Dorsolateral prefrontal cortex (tissue), 120 donors: ENCODE measurements at regions of chr17 and their contacts with region 1.

Region 1: DNA sequence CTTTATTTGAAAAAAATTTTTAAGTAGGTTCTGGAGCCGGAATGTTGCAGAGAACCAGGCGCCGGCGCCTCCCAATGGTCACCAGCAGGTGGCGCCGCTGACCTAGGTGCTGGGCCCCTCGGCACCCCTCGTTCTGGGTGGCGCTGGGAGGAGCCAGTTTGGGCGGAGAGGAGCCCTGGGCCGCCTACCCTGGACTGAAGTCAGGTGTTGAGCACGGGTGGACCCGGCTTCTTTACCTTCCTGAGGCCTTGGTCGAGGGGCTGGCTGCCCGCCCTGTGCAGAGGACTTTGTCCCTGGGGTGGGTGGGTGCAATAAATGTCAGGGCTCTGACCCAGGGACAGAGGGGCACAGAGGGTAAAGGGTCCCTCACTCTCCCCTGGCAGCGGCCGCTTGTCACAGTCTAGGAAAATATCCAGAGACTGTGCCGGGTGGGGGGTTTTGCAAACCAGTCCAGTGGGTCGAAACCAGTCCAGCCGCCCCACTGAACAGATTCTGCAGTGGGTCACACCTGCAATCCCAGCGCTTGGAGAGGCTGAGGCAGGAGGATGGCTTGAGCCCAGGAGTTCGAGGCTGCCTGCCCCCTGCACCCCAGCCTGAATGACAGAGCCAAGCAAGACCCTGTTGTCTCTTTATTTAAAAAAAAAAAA is 30.1 kb upstream of the TNFRSF13B start:
- DNase-seq: peak; percentile 67 to 88 (median 77)
- H3K4me3 ChIP-seq: peak overlapping the region in 19 of 59 donors; percentile 5 to 46 (median 23)
- H3K27ac ChIP-seq: peak overlapping the region in 2 of 59 donors; percentile 6 to 53
- H3K27me3 ChIP-seq: no peaks in the 10 kb centered on the region
- CTCF ChIP-seq: peak; percentile 84 to 99 (median 97)

Region 2: GRCh38 chr17:17041571-17042380 is 39.8 kb after region 1 on chr17:
- intact Hi-C with region 1: loop called in 1 of 2 experiments (anchors 5 kb)
- DNase-seq: peak; percentile 99 to 100 (median 99)
- H3K4me3 ChIP-seq: peak overlapping the region; percentile 49 to 86 (median 69)
- H3K27ac ChIP-seq: peak overlapping the region; percentile 49 to 94 (median 87)
- H3K27me3 ChIP-seq: no peaks in the 10 kb centered on the region
- CTCF ChIP-seq: peak in 12 of 56 donors; percentile 7 to 39 (median 18)

Region 3: DNA sequence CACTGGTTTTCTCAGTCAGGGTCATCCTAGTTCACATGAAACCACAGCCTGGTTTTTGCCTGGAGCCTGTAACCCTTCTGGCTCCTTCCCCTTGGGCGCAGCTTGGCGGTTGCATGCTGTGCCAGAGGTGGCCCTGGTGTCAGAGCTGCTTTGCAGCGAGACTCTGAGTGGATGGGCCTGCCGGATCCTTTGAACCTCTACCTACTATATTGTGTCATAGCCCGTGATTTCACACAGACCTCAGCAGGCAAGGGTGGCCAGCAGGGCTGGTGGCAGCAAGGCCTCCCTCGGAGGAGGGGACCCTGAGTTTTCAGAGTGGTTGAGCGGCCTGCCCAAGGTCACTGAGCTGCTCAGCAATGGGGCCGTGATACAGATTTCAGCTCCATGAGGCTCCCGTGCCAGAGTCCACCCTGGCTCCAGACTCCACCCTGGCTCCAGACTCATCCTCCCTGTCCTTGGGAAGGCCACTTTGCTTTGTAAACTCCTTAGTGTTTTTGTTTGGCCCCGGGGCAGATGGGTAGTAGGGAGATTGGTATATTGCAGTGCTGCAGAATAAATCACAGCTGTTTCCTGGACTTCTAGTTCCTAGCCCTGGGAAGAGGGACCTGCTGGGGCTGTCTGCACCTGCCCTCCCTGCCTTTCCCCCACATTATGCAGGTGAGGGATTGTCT is 49.9 kb after region 1 on chr17:
- intact Hi-C with region 1: no loop called
- DNase-seq: peak in 2 of 10 donors; percentile 24 to 35
- H3K4me3 ChIP-seq: no peak overlapping the region
- H3K27ac ChIP-seq: peak overlapping the region in 19 of 59 donors; percentile 0 to 66 (median 26)
- H3K27me3 ChIP-seq: no peaks in the 10 kb centered on the region
- CTCF ChIP-seq: no peak

Region 4: DNA sequence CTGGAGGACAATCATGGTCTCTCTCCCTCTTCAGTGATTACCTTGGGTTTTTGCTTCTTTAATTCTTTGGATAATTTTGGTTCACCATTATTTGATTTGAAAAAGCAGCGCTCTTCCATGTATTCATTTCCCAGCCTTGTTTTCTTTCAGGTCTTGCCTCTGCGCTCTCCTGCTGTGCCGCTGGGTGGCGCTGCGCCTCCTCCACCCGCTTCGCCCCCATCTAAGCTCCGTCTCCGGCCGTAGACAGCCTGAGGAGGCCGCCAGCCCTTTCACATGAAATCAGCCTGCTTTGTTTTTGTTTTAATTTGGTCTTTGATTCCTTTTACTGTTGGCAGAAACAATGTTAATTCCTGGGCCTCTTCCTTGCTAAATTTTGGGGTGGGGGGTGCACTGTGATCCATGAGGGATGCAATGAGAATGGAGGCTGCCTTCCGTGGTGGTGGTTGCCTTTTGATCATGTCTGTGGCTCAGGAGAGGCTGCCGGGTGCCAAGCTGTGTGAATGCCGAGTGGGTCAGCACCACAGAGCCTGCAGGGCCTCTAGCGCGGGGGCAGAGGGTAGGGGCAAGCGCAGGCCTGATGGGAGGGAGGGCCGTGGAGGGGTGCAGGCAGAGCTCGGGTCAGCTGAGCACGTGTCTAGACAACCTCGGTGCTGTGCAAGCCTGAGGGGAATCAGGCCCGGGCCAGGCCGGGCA is 140.0 kb after region 1 on chr17:
- intact Hi-C with region 1: loop called (anchors 10 kb)
- DNase-seq: peak; percentile 67 to 86 (median 77)
- H3K4me3 ChIP-seq: peak overlapping the region in 2 of 59 donors; percentile 3 to 4
- H3K27ac ChIP-seq: peak overlapping the region in 58 of 59 donors; percentile 21 to 90 (median 77)
- H3K27me3 ChIP-seq: no peaks in the 10 kb centered on the region
- CTCF ChIP-seq: peak; percentile 78 to 99 (median 92)

Region 5: GRCh38 chr17:17237026-17237799 is 235.2 kb after region 1 on chr17 and contains the start of gene FLCN:
- intact Hi-C with region 1: loop called in 1 of 2 experiments (anchors 5 kb)
- DNase-seq: peak; percentile 91 to 96 (median 94)
- H3K4me3 ChIP-seq: peak within 1 kb of the TSS; percentile 64 to 100 (median 98)
- H3K27ac ChIP-seq: peak within 1 kb of the TSS; percentile 95 to 100 (median 100)
- H3K27me3 ChIP-seq: no peaks in the 10 kb centered on the region
- CTCF ChIP-seq: peak in 7 of 56 donors; percentile 4 to 35 (median 10)
- total RNA-seq, gene FLCN: 77.5 to 263 (median 146) TPM

Region 6: GRCh38 chr17:17303010-17303846 is 301.2 kb after region 1 on chr17 and contains the start of gene NT5M:
- intact Hi-C with region 1: loop called in 1 of 2 experiments (anchors 10 kb)
- DNase-seq: peak; percentile 60 to 86 (median 82)
- H3K4me3 ChIP-seq: peak within 1 kb of the TSS; percentile 47 to 82 (median 70)
- H3K27ac ChIP-seq: peak within 1 kb of the TSS in 51 of 59 donors; percentile 3 to 84 (median 67)
- H3K27me3 ChIP-seq: no peaks in the 10 kb centered on the region
- CTCF ChIP-seq: peak in 4 of 56 donors; percentile 4 to 13 (median 9)
- total RNA-seq, gene NT5M: 7.4 to 19.5 (median 13.0) TPM